Heart right ventricle (tissue), 16 donors: ENCODE measurements at regions of chr9 and their contacts with region 1.

Region 1: GRCh38 chr9:120936011-120936763 is 9.6 kb upstream of the TRAF1 start:
- DNase-seq: peak; percentile 93 to 96
- ATAC-seq: peak; percentile 74 to 94 (median 86)
- H3K4me3 ChIP-seq: peak overlapping the region in 1 of 10 donors; percentile 12
- H3K27ac ChIP-seq: peak overlapping the region; percentile 8 to 95 (median 65)
- H3K4me1 ChIP-seq: peaks cover 13 to 63% (median 47%) of the 10 kb centered on the region in 9 donors
- H3K27me3 ChIP-seq: no peaks in the 10 kb centered on the region
- CTCF ChIP-seq: peak; percentile 75 to 97 (median 94)

Region 2: GRCh38 chr9:120755827-120756434 is 180.3 kb before region 1 on chr9:
- intact Hi-C with region 1: loop called (anchors 1 to 5 kb)
- DNase-seq: peak in 1 of 2 donors; percentile 54
- ATAC-seq: peak in 7 of 8 donors; percentile 50 to 78 (median 67)
- H3K4me3 ChIP-seq: no peak overlapping the region
- H3K27ac ChIP-seq: peak overlapping the region in 1 of 10 donors; percentile 15
- H3K4me1 ChIP-seq: peaks cover 0 to 24% (median 0%) of the 10 kb centered on the region in 9 donors
- H3K27me3 ChIP-seq: no peaks in the 10 kb centered on the region
- CTCF ChIP-seq: peak; percentile 79 to 93 (median 90)

Region 3: DNA sequence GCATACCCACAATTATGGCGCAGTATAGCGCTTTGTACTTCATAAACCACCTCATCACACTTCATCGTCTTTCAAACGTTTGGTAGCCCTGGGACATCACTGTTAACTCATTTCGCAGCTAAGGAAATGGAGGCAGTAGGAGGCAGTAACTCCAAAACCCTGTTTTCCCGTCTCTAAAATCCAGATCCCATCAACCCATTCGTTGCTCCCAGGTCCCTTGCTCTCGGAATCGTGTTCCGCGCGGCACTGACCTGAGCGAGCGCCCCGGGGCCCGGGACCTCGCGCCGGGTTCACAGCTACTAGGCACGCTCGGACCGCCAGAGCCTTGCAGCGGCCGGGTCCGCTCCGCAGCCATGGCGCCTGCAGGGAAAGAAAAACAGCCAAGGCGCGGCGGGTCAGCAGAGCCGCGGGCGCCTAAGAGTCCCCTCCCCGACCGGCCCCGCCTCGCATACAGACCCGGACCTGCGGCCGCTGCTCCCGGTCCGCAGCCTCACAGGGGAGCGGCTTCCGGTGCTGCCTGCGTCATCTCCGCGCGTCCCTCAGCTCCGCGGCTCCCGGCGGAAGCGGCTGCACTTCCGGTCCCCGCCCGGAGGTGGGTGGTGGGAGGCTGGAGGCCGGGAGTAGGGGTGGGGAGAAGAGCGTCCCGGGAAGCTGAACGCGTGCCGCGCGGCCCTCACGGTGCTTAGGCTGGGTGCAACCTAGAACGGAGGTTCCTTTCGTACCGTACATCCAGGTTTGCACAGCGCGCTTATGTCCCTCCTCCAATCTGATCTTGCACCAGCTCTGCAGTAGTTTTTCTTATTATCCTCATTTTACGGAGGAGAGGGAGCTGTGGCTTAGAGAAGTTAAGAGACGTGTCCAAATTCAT is 143.1 kb before region 1 on chr9 and contains the start of gene FBXW2:
- intact Hi-C with region 1: loop called in 2 of 10 experiments (anchors 1 to 5 kb)
- DNase-seq: peak; percentile 93
- ATAC-seq: peak; percentile 99 to 100 (median 100)
- H3K4me3 ChIP-seq: peak within 1 kb of the TSS; percentile 64 to 99 (median 90)
- H3K27ac ChIP-seq: peak within 1 kb of the TSS; percentile 38 to 97 (median 93)
- H3K4me1 ChIP-seq: peaks cover 0 to 44% (median 38%) of the 10 kb centered on the region in 9 donors
- H3K27me3 ChIP-seq: no peaks in the 10 kb centered on the region
- CTCF ChIP-seq: no peak
- total RNA-seq, gene FBXW2: 38.7 to 52.0 (median 46.1) TPM

Region 4: GRCh38 chr9:120868676-120869359 is 67.4 kb before region 1 on chr9:
- intact Hi-C with region 1: loop called in 6 of 10 experiments (anchors 2 to 10 kb)
- DNase-seq: peak; percentile 95 to 96
- ATAC-seq: peak; percentile 94 to 97 (median 95)
- H3K4me3 ChIP-seq: peak overlapping the region; percentile 43 to 77 (median 60)
- H3K27ac ChIP-seq: peak overlapping the region; percentile 1 to 89 (median 82)
- H3K4me1 ChIP-seq: peaks cover 0 to 18% (median 9%) of the 10 kb centered on the region in 9 donors
- H3K27me3 ChIP-seq: no peaks in the 10 kb centered on the region
- CTCF ChIP-seq: peak in 7 of 9 donors; percentile 26 to 75 (median 62)

Region 5: GRCh38 chr9:120875954-120876841 is 60.0 kb before region 1 on chr9:
- intact Hi-C with region 1: loop called in 6 of 10 experiments (anchors 2 to 10 kb)
- DNase-seq: peak; percentile 82
- ATAC-seq: peak; percentile 70 to 83 (median 81)
- H3K4me3 ChIP-seq: peak overlapping the region; percentile 49 to 86 (median 74)
- H3K27ac ChIP-seq: peak overlapping the region; percentile 76 to 96 (median 92)
- H3K4me1 ChIP-seq: peaks cover 0 to 21% (median 9%) of the 10 kb centered on the region in 9 donors
- H3K27me3 ChIP-seq: no peaks in the 10 kb centered on the region
- CTCF ChIP-seq: peak in 2 of 9 donors; percentile 7 to 21

Region 6: DNA sequence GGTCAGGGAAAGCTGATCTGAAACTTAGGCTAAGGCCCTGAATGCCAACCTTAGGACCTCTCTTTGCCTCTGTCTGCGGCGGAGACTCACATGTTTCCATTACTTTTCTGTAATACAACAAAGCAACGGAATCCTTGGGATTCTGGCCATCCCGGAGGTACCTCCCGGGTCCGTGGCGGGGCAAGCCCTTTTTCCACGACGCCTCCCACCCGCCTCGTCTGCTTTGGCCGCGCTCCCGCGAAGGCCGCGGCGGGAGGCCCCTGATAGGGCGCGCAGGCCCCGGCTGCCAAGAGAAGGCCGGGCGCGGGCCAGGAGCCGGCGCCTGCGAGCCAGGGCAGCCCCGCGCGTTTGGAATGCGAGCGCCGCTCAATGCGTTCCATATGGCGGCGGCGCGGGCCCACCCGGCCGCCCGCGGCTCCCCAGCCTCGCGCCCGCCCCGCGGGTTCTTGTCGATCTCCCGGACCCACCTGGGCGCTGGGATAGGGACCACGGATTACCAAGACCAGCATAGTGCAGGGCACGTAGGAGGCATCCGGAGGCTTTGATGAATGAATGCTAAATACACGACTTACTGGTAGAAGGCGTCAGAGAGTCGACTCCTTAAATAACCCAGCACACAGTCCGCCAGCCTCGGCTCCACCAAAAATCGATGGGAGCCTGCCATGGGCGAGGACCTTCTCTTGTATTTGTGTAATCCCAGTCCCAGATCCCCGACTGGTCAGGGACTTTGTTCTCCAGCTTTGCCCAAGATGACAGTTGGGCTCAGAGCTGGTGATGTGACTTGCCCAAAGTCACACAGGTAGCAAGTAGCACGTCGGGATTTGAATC is 41.7 kb before region 1 on chr9:
- intact Hi-C with region 1: loop called in 1 of 10 experiments (anchors 2 kb)
- DNase-seq: peak in 1 of 2 donors; percentile 67
- ATAC-seq: peak; percentile 60 to 87 (median 73)
- H3K4me3 ChIP-seq: peak overlapping the region in 9 of 10 donors; percentile 20 to 48 (median 34)
- H3K27ac ChIP-seq: peak overlapping the region in 9 of 10 donors; percentile 15 to 76 (median 62)
- H3K4me1 ChIP-seq: peaks cover 2 to 51% (median 13%) of the 10 kb centered on the region in 9 donors
- H3K27me3 ChIP-seq: no peaks in the 10 kb centered on the region
- CTCF ChIP-seq: no peak